Activated T-helper 1 cell treated with anti-CD3 and anti-CD28 coated beads, Interleukin-12 subunit alpha, Interleukin-12 subunit beta, Interleukin-2, Interleukin-4 antibody, amounts not matched to agents 30 ng/mL and 10 ng/mL and 1 ng/mL, durations not matched to agents 14 hours and 24 hours and 36 hours (primary cell): ENCODE measurements at regions of chr10 and their contacts with region 1.

Region 1: GRCh38 chr10:62082729-62083411 is 181.4 kb downstream of the ARID5B start:
- DNase-seq: peak; percentile 26
- H3K4me3 Mint-ChIP-seq: peak overlapping the region; percentile 78
- H3K27ac Mint-ChIP-seq: peak overlapping the region; percentile 84
- H3K4me1 Mint-ChIP-seq: peaks cover 72% of the 10 kb centered on the region
- H3K27me3 Mint-ChIP-seq: no peaks in the 10 kb centered on the region

Region 2: GRCh38 chr10:62063795-62064472 is 18.9 kb before region 1 on chr10:
- intact Hi-C with region 1: loop called (anchors 2 kb)
- DNase-seq: no peak
- H3K4me3 Mint-ChIP-seq: peak overlapping the region; percentile 61
- H3K27ac Mint-ChIP-seq: peak overlapping the region; percentile 85
- H3K4me1 Mint-ChIP-seq: peaks cover 81% of the 10 kb centered on the region
- H3K27me3 Mint-ChIP-seq: no peaks in the 10 kb centered on the region

Region 3: DNA sequence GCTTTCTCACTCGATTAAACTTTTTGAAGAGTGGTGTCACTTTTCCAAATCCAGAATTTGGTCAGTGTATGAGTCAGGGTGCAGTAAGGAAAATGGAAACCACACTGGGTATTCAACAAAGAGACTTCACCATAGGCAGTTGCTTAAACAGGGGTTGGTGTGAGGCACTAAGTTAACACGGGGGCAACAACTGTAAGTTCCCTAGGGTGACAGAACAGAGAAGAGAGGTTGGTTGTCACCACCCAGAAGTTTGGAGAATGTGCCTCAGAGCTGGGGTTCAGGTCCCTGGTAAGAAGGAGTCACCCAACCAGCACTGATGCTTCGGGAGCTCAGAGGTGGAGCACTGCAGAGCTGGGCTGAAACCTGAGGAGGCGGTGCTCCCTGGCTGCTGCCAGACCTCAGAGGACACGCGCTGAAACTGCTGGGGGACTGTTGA is 11.0 kb before region 1 on chr10:
- intact Hi-C with region 1: loop called (anchors 1 kb)
- DNase-seq: no peak
- H3K4me3 Mint-ChIP-seq: no peak overlapping the region
- H3K27ac Mint-ChIP-seq: peak overlapping the region; percentile 81
- H3K4me1 Mint-ChIP-seq: peaks cover 74% of the 10 kb centered on the region
- H3K27me3 Mint-ChIP-seq: no peaks in the 10 kb centered on the region

Region 4: GRCh38 chr10:62121187-62121530 is 38.3 kb after region 1 on chr10:
- intact Hi-C with region 1: loop called (anchors 1 kb)
- DNase-seq: no peak
- H3K4me3 Mint-ChIP-seq: peak overlapping the region; percentile 1
- H3K27ac Mint-ChIP-seq: peak overlapping the region; percentile 64
- H3K4me1 Mint-ChIP-seq: peaks cover 16% of the 10 kb centered on the region
- H3K27me3 Mint-ChIP-seq: no peaks in the 10 kb centered on the region

Region 5: GRCh38 chr10:62618576-62619412 is 535.9 kb after region 1 on chr10:
- intact Hi-C with region 1: no loop called
- DNase-seq: no peak
- H3K4me3 Mint-ChIP-seq: no peak overlapping the region
- H3K27ac Mint-ChIP-seq: no peak overlapping the region
- H3K4me1 Mint-ChIP-seq: peaks cover 65% of the 10 kb centered on the region
- H3K27me3 Mint-ChIP-seq: peaks cover 12% of the 10 kb centered on the region